IMR-90 (cell line): ENCODE measurements at regions of chr12 and their contacts with region 1.

Region 1: DNA sequence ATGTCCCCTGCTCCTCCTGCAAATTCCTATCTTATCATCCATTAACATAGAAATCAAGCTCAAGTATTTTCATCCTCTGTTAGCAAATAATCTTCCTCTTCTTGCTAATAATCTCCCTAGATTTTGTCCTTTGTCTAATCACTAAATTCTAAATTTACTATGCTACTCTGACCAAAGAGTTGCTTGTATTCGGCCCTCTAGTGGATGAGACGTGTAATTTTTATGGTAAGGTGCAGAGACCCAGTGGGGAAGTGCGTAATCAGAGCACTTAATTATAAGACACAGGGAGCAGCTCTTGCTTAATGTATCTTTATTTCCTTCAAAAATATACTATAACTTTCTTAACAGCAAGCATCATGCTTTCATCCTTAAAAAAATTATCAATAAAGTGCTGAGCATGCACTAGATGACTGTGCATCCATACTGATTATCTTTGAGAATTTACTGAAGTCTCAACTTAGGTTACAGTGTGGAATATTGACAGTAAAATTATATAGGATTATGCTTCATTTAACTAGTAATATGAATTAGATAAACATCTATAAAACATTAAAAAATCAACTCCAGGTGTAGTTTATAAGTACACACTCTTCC is 212.6 kb downstream of the SLC16A7 start:
- DNase-seq: peak; percentile 41
- ATAC-seq: peak; percentile 84
- H3K4me3 ChIP-seq: no peak overlapping the region
- H3K27ac ChIP-seq: no peak overlapping the region
- H3K4me1 ChIP-seq: no peaks in the 10 kb centered on the region; the same call in 1 of the 2 replicates
- H3K27me3 ChIP-seq: no peaks in the 10 kb centered on the region
- CTCF ChIP-seq: peak; percentile 64
- POLR2A ChIP-seq: no peak
- RAD21 ChIP-seq: peak; percentile 59

Region 2: GRCh38 chr12:57993025-57993424 is 1815.4 kb before region 1 on chr12:
- CTCF ChIA-PET with region 1: no interaction called
- POLR2A ChIA-PET with region 1: no interaction called
- dilution Hi-C with region 1: no loop called
- in situ Hi-C with region 1: no loop called
- intact Hi-C with region 1: loop called (anchors 10 kb)
- DNase-seq: peak; percentile 28
- ATAC-seq: peak; percentile 88
- H3K4me3 ChIP-seq: no peak overlapping the region
- H3K27ac ChIP-seq: no peak overlapping the region
- H3K4me1 ChIP-seq: no peaks in the 10 kb centered on the region
- H3K27me3 ChIP-seq: no peaks in the 10 kb centered on the region; the same call in 1 of the 2 replicates
- CTCF ChIP-seq: peak; percentile 49
- POLR2A ChIP-seq: no peak
- RAD21 ChIP-seq: peak; percentile 45; the same call in 1 of the 2 replicates

Region 3: DNA sequence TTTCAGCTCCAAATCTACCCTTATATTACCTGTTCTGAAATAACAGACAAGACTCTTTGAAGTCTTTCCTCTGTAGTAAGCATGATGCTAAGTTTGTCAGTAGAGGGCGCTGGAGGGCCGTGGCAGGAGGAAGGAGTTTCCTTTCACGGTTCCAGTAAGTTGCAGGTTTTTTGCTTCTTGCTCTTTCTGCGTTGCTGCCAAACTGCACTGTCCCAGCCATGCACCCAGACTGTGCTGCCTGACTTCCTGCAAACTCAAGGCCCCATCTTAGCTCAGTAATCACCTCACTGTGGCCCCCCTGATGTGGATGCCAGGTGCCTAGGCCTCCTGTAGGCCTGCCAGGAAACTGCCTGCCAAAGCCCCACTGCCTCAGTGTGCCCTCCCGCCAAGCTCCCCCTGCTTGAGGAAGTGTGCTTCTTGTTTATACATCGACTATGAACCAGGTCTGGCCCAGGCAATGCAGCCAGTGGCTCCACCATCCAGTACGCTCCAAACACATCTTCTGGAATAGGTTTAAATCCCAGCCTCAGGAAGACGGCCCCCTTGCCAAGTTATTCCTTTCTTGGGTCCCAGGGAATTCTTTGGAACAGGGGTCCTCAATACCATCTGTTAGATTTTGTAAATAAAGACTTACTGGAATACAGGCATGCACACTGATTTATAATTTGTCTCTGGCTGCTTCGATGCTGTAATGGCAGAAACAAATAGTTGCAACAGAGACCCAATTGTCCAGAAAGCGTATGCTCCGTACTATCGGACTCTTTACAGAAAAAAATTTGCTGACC is 694.4 kb before region 1 on chr12:
- CTCF ChIA-PET with region 1: no interaction called
- POLR2A ChIA-PET with region 1: no interaction called
- dilution Hi-C with region 1: no loop called
- in situ Hi-C with region 1: no loop called
- intact Hi-C with region 1: loop called (anchors 5 kb)
- DNase-seq: peak; percentile 81
- ATAC-seq: peak; percentile 90
- H3K4me3 ChIP-seq: no peak overlapping the region
- H3K27ac ChIP-seq: no peak overlapping the region
- H3K4me1 ChIP-seq: peaks cover 2% of the 10 kb centered on the region; the same call in 1 of the 2 replicates
- H3K27me3 ChIP-seq: no peaks in the 10 kb centered on the region
- CTCF ChIP-seq: peak; percentile 93
- POLR2A ChIP-seq: no peak
- RAD21 ChIP-seq: peak; percentile 90

Region 4: DNA sequence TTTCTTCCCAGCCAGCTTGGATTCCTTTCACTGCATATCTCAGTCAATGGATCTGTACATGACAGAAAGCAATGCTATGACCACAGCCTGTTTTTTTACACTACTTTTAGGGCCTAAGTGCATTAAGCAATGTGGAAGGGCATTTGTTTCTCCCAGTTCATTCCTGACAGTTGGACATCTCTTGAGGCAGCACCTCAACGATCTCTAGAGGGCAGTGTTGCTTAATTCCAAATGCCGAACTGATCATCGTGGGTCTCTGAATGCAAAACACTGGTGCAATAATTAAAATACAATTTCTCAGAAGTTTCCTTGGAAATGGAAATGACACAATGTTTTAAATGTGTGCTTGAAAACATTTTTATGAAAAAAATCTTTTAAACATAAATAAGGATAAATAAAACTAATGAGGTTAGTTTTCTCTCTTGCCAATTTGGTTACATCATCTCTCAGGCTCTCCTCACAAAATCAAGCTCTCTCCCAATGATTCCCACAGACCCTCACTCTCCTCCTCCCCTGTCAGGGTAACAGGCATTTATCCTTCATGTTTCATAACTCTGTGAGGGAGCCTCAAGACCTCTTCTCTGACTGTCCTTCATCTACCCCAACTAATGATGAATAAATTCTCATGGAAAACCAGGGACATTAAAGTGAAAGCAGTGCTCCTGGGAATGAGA is 405.0 kb before region 1 on chr12:
- CTCF ChIA-PET with region 1: interaction called, 3 read pairs
- POLR2A ChIA-PET with region 1: no interaction called
- dilution Hi-C with region 1: no loop called
- in situ Hi-C with region 1: loop called (anchors 25 kb)
- intact Hi-C with region 1: loop called (anchors 2 kb)
- DNase-seq: peak; percentile 75
- ATAC-seq: peak; percentile 98
- H3K4me3 ChIP-seq: peak overlapping the region; percentile 19; the same call in 1 of the 2 replicates
- H3K27ac ChIP-seq: peak overlapping the region; percentile 35; the same call in 1 of the 2 replicates
- H3K4me1 ChIP-seq: no peaks in the 10 kb centered on the region
- H3K27me3 ChIP-seq: no peaks in the 10 kb centered on the region
- CTCF ChIP-seq: peak; percentile 82
- POLR2A ChIP-seq: no peak
- RAD21 ChIP-seq: peak; percentile 85

Region 5: DNA sequence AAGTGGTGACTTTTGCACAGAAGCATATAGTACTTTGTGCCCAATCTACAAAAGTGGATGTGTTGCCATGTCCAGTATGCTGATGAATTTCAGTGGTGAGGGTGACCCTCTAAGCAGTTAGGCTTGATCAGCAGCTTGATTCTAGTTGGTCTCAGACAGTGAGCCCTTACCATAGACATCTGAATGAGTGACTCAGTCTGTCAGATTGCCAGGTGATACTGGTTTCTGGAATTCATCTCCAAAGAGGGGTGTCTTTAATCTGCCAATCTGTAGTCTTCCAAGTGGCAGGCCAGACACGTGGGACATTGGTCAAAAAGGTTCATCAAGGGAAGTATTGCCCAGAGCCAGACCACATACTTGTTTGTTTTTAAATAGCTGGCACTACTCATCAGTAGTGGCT is 400.0 kb before region 1 on chr12:
- CTCF ChIA-PET with region 1: interaction called, 3 read pairs
- POLR2A ChIA-PET with region 1: no interaction called
- dilution Hi-C with region 1: no loop called
- in situ Hi-C with region 1: loop called (anchors 25 kb)
- intact Hi-C with region 1: loop called (anchors 2 kb)
- DNase-seq: peak; percentile 26
- ATAC-seq: no peak
- H3K4me3 ChIP-seq: no peak overlapping the region
- H3K27ac ChIP-seq: no peak overlapping the region
- H3K4me1 ChIP-seq: no peaks in the 10 kb centered on the region
- H3K27me3 ChIP-seq: no peaks in the 10 kb centered on the region
- CTCF ChIP-seq: no peak
- POLR2A ChIP-seq: no peak
- RAD21 ChIP-seq: no peak

Region 6: GRCh38 chr12:60205500-60205899 is 397.1 kb after region 1 on chr12:
- CTCF ChIA-PET with region 1: no interaction called
- POLR2A ChIA-PET with region 1: no interaction called
- dilution Hi-C with region 1: no loop called
- in situ Hi-C with region 1: no loop called
- intact Hi-C with region 1: no loop called
- DNase-seq: peak; percentile 41
- ATAC-seq: no peak
- H3K4me3 ChIP-seq: no peak overlapping the region
- H3K27ac ChIP-seq: no peak overlapping the region
- H3K4me1 ChIP-seq: peaks cover 9% of the 10 kb centered on the region; the same call in 1 of the 2 replicates
- H3K27me3 ChIP-seq: no peaks in the 10 kb centered on the region
- CTCF ChIP-seq: no peak
- POLR2A ChIP-seq: no peak
- RAD21 ChIP-seq: no peak